A549 (cell line): ENCODE measurements at regions of chr7 and their contacts with region 1.

Region 1: GRCh38 chr7:142496545-142497041 is 238.7 kb upstream of the PRSS58 start:
- DNase-seq: peak in 1 of 2 experiments; percentile 39
- ATAC-seq: peak; percentile 75 to 88; a peak in 4 of 6 replicates
- H3K4me3 ChIP-seq: no peak overlapping the region
- H3K27ac ChIP-seq: no peak overlapping the region
- H3K4me1 ChIP-seq: no peaks in the 10 kb centered on the region
- CTCF ChIP-seq: peak; percentile 60
- EP300 ChIP-seq: no peak
- POLR2A ChIP-seq: no peak
- RAD21 ChIP-seq: peak; percentile 39 to 54; a peak in 4 of 5 replicates

Region 2: GRCh38 chr7:142279601-142280000 is 217.0 kb before region 1 on chr7:
- CTCF ChIA-PET with region 1: no interaction called
- POLR2A ChIA-PET with region 1: no interaction called
- DNase-seq: no peak
- ATAC-seq: no peak
- H3K4me3 ChIP-seq: no peak overlapping the region
- H3K27ac ChIP-seq: no peak overlapping the region
- H3K4me1 ChIP-seq: no peaks in the 10 kb centered on the region
- CTCF ChIP-seq: no peak
- EP300 ChIP-seq: no peak
- POLR2A ChIP-seq: no peak
- RAD21 ChIP-seq: no peak

Region 3: DNA sequence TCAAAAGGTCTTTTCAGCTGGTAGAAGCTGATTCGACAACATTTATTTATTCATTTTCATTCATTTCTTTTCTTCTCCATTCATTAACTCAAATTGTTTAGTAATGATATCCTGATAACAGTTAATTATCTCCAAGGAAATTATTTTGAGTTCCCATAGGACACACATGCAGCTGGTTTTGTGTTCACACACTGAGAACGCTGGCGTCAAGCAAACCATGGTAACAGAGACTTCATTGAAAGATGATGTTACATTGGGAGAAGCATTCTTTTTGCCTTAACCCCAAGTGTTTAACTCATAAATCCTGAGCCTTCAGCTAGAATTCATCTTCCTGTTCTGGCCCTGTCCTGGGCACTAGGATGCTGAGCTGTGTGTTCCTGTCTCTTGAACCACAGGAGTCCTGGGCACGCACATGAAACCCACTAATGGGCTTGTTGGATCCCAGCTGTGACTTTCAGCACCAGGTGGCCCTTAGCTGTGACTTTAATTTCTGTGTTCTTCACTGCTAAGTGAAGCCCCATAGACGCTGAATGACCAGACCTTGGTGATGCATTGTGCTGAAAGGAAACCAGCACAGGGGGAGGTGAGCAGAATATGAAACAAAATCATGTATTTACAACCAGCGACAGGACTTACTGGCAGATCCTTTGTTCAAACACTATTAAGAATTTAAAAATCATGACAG is 117.2 kb before region 1 on chr7:
- CTCF ChIA-PET with region 1: no interaction called
- POLR2A ChIA-PET with region 1: no interaction called
- DNase-seq: no peak
- ATAC-seq: no peak
- H3K4me3 ChIP-seq: no peak overlapping the region
- H3K27ac ChIP-seq: no peak overlapping the region
- H3K4me1 ChIP-seq: no peaks in the 10 kb centered on the region
- CTCF ChIP-seq: no peak
- EP300 ChIP-seq: no peak
- POLR2A ChIP-seq: no peak
- RAD21 ChIP-seq: no peak

Region 4: DNA sequence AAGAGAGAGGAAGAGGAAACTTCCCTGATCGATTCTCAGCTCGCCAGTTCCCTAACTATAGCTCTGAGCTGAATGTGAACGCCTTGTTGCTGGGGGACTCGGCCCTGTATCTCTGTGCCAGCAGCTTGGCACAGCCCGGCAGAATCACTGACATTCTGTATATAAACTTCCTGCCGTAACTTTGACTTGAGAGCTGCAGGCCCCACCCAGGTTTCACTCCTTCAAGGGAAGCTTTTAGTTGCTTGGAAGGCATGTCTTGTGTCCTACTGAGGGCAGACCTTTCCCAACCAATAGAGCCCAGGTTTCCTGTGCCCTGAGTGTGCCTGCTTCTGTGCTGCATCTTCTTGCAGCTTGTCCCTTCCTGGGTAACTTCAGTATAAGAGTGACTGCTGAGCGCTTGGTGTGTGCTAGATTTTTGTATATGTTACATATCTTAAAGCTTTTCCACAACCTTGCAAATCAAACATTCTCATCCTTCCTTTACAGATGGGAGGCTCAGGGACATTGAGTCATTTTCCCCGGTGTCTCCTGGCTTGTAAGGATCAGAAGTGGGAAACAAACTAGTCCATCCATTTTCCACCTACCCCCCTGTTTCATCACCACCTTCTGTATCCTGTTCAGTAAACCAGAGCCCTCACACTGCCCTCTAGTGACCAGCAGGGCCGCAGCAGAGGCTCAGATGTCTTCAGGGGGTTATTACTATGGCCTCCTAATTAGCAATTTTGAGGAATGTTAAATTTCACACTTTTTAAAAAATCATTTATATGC is 13.5 kb before region 1 on chr7:
- CTCF ChIA-PET with region 1: interaction called, 16 read pairs
- POLR2A ChIA-PET with region 1: no interaction called
- DNase-seq: peak; percentile 25
- ATAC-seq: peak; percentile 80 to 88
- H3K4me3 ChIP-seq: no peak overlapping the region
- H3K27ac ChIP-seq: no peak overlapping the region
- H3K4me1 ChIP-seq: no peaks in the 10 kb centered on the region
- CTCF ChIP-seq: peak; percentile 70
- EP300 ChIP-seq: no peak
- POLR2A ChIP-seq: no peak
- RAD21 ChIP-seq: peak in 1 of 2 experiments; percentile 40; a peak in 3 of 5 replicates

Region 5: DNA sequence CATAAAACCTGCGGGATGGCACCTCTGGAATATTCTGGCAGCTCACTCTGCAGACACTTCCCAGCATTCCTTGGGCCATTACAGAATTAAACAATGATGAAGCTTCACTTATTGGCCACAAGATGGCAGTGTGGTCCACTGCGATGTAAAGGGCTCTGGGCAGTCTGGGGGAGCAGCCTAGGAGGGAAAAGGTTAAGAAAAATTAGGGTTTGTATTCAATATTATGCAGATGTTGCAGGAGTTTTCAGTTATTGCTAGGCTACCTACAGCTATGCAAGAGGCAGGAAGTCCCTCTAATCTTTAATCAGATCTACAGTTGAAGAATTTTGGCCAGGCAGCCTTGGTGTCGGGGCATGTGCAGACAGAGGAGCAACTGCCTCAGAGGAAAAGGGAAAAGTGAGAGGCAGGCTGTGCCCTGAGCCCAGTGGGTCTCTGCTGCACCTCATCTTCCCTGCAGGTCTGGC is 19.5 kb after region 1 on chr7:
- CTCF ChIA-PET with region 1: interaction called, 12 read pairs
- POLR2A ChIA-PET with region 1: no interaction called
- DNase-seq: peak; percentile 38 to 71
- ATAC-seq: peak; percentile 75 to 94
- H3K4me3 ChIP-seq: no peak overlapping the region
- H3K27ac ChIP-seq: no peak overlapping the region
- H3K4me1 ChIP-seq: no peaks in the 10 kb centered on the region
- CTCF ChIP-seq: peak; percentile 64
- EP300 ChIP-seq: no peak
- POLR2A ChIP-seq: no peak
- RAD21 ChIP-seq: peak; percentile 51 to 66